CD4-positive, alpha-beta memory T cell (primary cell): ENCODE measurements at regions of chr19 and their contacts with region 1.

Region 1: DNA sequence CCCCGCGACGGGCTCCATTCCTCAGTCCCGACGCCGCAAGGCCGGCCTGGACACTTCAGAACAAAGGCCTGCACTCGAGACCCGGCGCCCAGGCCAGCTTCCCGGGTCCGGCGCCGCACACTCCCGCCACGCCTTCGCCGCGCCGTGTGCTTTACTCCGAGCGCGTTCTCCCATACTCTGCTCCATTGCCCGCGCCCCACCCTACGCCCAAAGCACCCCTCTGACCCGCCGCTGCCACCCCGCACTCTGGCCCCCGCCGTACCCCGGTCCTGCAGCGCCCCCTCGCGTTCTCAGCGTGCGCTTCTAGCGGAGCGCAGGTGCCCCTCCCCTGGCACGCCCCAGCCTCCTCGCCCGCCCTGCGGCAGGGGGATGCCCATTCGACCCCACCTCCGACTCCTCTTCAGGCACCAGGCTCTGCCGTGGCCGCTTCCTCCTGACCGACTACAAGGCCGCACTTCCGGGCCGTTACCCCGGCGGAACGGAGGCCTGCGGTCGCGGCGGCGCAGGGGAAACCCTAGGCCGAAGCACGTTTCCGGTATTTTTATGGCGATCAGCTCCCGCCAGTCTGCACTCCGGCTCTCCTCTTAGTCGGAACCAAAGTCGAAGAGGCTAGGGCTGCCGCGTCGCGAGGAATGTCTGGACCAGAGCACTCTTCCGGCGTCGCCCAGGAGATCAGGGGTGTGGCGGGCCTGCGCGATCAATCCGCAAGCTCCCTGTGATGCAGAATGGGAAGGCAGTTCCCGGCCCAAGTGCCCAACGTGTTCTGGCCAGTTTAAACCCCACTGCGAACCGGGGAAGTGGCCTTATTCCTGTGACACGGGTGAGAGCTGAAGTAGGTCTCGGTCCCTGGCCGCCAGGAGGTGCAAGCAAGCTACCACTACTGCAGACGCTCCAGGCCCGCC is at the start of gene ZBTB45:
- DNase-seq: peak; percentile 88 to 92 (median 89)
- H3K4me3 ChIP-seq: peak within 1 kb of the TSS; percentile 81 to 88
- H3K4me3 Mint-ChIP-seq: peak within 1 kb of the TSS; percentile 92 to 97 (median 95)
- H3K27ac ChIP-seq: peak within 1 kb of the TSS; percentile 82
- H3K27ac Mint-ChIP-seq: peak within 1 kb of the TSS; percentile 97 to 99 (median 98)
- H3K4me1 ChIP-seq: peaks cover 28% of the 10 kb centered on the region
- H3K4me1 Mint-ChIP-seq: peaks cover 14 to 53% (median 30%) of the 10 kb centered on the region in 4 donors
- H3K27me3 ChIP-seq: no peaks in the 10 kb centered on the region
- H3K27me3 Mint-ChIP-seq: no peaks in the 10 kb centered on the region
- total RNA-seq, gene ZBTB45: 19.8 TPM

Region 2: GRCh38 chr19:58252102-58252685 is 267.4 kb before region 1 on chr19:
- CTCF ChIA-PET with region 1: no interaction called
- POLR2A ChIA-PET with region 1: no interaction called
- intact Hi-C with region 1: no loop called
- DNase-seq: no peak
- H3K4me3 ChIP-seq: no peak overlapping the region
- H3K4me3 Mint-ChIP-seq: no peak overlapping the region
- H3K27ac ChIP-seq: no peak overlapping the region
- H3K27ac Mint-ChIP-seq: no peak overlapping the region
- H3K4me1 ChIP-seq: no peaks in the 10 kb centered on the region
- H3K4me1 Mint-ChIP-seq: no peaks in the 10 kb centered on the region
- H3K27me3 ChIP-seq: no peaks in the 10 kb centered on the region
- H3K27me3 Mint-ChIP-seq: no peaks in the 10 kb centered on the region

Region 3: DNA sequence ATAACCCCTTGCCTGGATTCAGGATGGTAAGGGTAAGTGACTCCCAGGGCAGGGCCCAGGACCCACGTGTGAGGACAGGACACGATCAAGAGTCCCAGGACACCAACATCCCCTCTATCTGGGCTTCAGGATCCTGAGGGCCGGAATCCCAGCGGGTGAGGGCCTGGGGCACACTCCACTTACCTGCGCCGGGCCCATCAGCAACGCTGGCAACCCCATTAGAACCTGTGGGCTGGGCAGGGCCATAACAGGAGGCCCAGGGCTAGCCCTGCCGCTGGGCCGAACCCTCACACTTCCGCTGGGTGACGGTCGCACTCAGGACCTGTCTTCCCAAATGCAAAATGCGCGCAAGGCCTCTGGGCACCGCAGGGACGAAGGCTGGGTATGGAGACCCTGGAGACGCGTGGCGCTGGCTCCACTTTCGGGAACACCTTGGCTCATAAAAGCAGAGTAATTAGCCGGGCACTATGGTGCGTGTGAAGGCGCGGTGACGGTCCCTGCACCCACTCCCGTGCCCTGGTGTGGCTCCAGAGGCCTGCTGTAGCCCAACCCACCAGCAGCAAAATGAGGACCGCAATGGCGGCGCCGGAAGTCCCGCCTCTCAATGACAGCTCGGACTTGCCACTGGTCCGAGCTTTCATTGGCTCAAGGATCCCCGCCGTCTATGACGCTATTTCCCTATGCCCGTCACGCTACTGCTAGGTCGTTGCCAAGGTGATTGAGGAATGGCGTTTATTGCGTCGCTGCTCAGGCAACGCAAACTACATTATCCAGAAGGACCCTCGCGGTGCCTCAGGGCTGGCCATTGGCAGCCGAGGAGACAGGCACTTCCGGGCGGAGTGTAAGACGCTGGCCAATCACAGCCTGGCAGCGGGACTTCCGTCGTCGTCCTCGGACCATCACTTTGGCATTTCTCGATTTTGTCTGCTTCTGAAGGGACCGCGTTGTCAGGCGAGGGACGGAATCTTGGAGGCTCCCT is 79.7 kb before region 1 on chr19 and contains the start of gene ZNF132:
- CTCF ChIA-PET with region 1: interaction called, 5 read pairs
- POLR2A ChIA-PET with region 1: interaction called, 8 read pairs
- intact Hi-C with region 1: loop called (anchors 2 kb)
- DNase-seq: peak; percentile 93 to 99 (median 98)
- H3K4me3 ChIP-seq: peak within 1 kb of the TSS; percentile 72 to 80
- H3K4me3 Mint-ChIP-seq: peak within 1 kb of the TSS; percentile 87 to 97 (median 96)
- H3K27ac ChIP-seq: peak within 1 kb of the TSS; percentile 69
- H3K27ac Mint-ChIP-seq: peak within 1 kb of the TSS; percentile 82 to 100 (median 99)
- H3K4me1 ChIP-seq: peaks cover 18% of the 10 kb centered on the region
- H3K4me1 Mint-ChIP-seq: peaks cover 12 to 30% (median 22%) of the 10 kb centered on the region in 4 donors
- H3K27me3 ChIP-seq: no peaks in the 10 kb centered on the region
- H3K27me3 Mint-ChIP-seq: peaks cover 2 to 3% of the 10 kb centered on the region in 2 donors
- total RNA-seq, gene ZNF132: 9.5 to 11.7 TPM

Region 4: DNA sequence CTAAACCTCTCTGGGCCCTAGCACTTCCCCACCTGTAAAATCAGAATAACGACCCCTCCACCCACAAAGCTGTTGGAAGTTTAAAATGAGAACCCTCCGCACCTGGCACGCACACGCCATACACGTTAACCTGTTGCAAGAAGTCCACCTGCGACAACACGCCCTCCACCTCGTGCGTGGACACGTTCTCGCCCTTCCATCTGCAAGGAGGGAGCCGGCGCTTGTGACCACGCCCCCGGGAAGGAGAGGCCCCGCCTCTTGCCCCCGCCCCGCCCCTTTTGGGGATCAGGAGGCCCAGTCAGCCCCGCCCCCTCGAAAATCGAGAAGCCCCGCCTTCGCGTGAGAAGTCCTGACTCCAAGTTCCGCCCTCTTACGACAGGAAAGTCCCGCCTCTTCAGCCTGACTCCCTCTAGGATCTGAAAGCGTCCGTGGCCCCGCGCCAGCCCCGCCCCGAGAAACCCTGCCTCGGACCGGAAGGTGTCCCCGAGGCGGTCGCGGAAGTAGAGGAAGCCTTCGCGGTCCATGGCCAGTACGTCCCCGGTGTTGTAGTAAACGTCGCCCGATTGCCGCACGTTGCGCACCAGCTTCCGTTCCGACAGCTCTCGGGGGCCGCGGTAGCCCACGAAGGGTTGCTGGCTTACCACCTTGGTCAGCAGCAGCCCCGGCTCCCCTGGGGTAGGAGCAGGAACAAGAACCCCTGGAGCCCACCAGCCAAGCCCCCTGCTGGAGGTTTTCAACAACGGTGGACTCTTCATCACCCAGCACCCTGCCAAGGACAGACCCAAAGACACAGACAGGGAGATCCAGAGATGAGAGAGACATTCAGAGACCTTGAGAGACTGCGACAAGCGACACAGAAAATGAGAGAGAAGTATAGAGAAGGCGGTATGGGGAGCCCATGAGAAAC is 20.3 kb before region 1 on chr19:
- CTCF ChIA-PET with region 1: interaction called, 6 read pairs
- POLR2A ChIA-PET with region 1: interaction called, 33 read pairs
- intact Hi-C with region 1: loop called (anchors 1 kb)
- DNase-seq: peak; percentile 89 to 96 (median 90)
- H3K4me3 ChIP-seq: peak overlapping the region; percentile 34 to 52
- H3K4me3 Mint-ChIP-seq: peak overlapping the region; percentile 86 to 94 (median 91)
- H3K27ac ChIP-seq: peak overlapping the region; percentile 66
- H3K27ac Mint-ChIP-seq: peak overlapping the region; percentile 77 to 98 (median 96)
- H3K4me1 ChIP-seq: peaks cover 16% of the 10 kb centered on the region
- H3K4me1 Mint-ChIP-seq: peaks cover 14 to 25% (median 17%) of the 10 kb centered on the region in 4 donors
- H3K27me3 ChIP-seq: no peaks in the 10 kb centered on the region
- H3K27me3 Mint-ChIP-seq: no peaks in the 10 kb centered on the region

Region 5: DNA sequence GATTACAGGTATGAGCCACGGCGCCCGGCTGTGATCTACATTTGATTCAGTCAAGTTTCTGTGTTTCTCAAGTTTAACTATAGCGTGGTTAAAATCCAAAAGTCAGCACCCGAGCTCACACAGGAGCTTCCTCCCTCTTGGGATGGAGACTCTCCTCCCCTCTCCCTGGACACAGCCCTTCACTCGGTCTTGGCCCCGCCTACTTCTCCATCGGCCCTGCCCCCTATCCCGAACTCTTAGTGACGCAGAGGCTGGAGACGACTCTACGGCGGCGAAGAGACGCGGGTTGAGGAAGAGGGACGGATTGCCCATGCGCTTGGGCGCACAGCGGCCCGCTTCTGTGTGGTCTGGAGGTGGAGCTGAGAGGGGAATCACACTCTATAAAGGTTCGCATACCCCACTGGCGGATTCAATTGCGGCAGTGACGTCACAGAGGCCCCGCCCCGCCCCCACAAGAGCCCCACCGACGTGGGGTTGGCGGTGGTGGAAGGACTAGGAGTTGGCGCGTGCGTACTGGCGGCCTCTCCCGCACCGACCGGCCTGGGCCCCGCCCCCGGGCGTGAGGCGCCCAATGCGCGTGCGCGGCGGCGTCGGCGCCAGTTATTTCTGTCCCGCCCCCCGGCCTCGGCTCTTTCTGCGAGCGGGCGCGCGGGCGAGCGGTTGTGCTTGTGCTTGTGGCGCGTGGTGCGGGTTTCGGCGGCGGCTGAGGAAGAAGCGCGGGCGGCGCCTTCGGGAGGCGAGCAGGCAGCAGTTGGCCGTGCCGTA is 24.4 kb after region 1 on chr19 and contains the start of gene TRIM28:
- CTCF ChIA-PET with region 1: interaction called, 13 read pairs
- POLR2A ChIA-PET with region 1: interaction called, 96 read pairs
- intact Hi-C with region 1: loop called (anchors 1 kb)
- DNase-seq: peak; percentile 100
- H3K4me3 ChIP-seq: peak within 1 kb of the TSS; percentile 86 to 87
- H3K4me3 Mint-ChIP-seq: peak within 1 kb of the TSS; percentile 91 to 97 (median 95)
- H3K27ac ChIP-seq: peak within 1 kb of the TSS; percentile 78
- H3K27ac Mint-ChIP-seq: peak within 1 kb of the TSS; percentile 95 to 100 (median 99)
- H3K4me1 ChIP-seq: peaks cover 30% of the 10 kb centered on the region
- H3K4me1 Mint-ChIP-seq: peaks cover 20 to 39% (median 27%) of the 10 kb centered on the region in 4 donors
- H3K27me3 ChIP-seq: no peaks in the 10 kb centered on the region
- H3K27me3 Mint-ChIP-seq: peaks cover 0 to 7% of the 10 kb centered on the region in 2 donors
- total RNA-seq, gene TRIM28: 342 to 348 TPM

Region 6: GRCh38 chr19:58572818-58573657 is 53.4 kb after region 1 on chr19 and contains the start of gene MZF1:
- CTCF ChIA-PET with region 1: interaction called, 260 read pairs
- POLR2A ChIA-PET with region 1: interaction called, 47 read pairs
- intact Hi-C with region 1: loop called (anchors 1 kb)
- DNase-seq: peak; percentile 99 to 100 (median 100)
- H3K4me3 ChIP-seq: peak within 1 kb of the TSS; percentile 67 to 78
- H3K4me3 Mint-ChIP-seq: peak within 1 kb of the TSS; percentile 89 to 99 (median 96)
- H3K27ac ChIP-seq: peak within 1 kb of the TSS; percentile 99
- H3K27ac Mint-ChIP-seq: peak within 1 kb of the TSS; percentile 96 to 100 (median 100)
- H3K4me1 ChIP-seq: peaks cover 29% of the 10 kb centered on the region
- H3K4me1 Mint-ChIP-seq: peaks cover 16 to 44% (median 32%) of the 10 kb centered on the region in 4 donors
- H3K27me3 ChIP-seq: no peaks in the 10 kb centered on the region
- H3K27me3 Mint-ChIP-seq: no peaks in the 10 kb centered on the region
- total RNA-seq, gene MZF1: 42.7 to 44.4 TPM